Mammary epithelial cell (primary cell): ENCODE measurements at regions of chr1 and their contacts with region 1.

Region 1: GRCh38 chr1:214476958-214477870 is 74.2 kb downstream of the PTPN14 start:
- DNase-seq: peak; percentile 100
- H3K4me3 ChIP-seq: peak overlapping the region in 2 of 3 experiments; percentile 15 to 29
- H3K27ac ChIP-seq: peak overlapping the region; percentile 98
- H3K4me1 ChIP-seq: peaks cover 64% of the 10 kb centered on the region
- H3K27me3 ChIP-seq: no peaks in the 10 kb centered on the region
- CTCF ChIP-seq: no peak

Region 2: GRCh38 chr1:214404571-214405213 is 72.5 kb before region 1 on chr1:
- CTCF ChIA-PET with region 1: no interaction called
- dilution Hi-C with region 1: no loop called
- in situ Hi-C with region 1: no loop called
- intact Hi-C with region 1: loop called (anchors 5 kb)
- DNase-seq: peak; percentile 98
- H3K4me3 ChIP-seq: no peak overlapping the region
- H3K27ac ChIP-seq: peak overlapping the region; percentile 95
- H3K4me1 ChIP-seq: peaks cover 34% of the 10 kb centered on the region
- H3K27me3 ChIP-seq: no peaks in the 10 kb centered on the region
- CTCF ChIP-seq: no peak

Region 3: DNA sequence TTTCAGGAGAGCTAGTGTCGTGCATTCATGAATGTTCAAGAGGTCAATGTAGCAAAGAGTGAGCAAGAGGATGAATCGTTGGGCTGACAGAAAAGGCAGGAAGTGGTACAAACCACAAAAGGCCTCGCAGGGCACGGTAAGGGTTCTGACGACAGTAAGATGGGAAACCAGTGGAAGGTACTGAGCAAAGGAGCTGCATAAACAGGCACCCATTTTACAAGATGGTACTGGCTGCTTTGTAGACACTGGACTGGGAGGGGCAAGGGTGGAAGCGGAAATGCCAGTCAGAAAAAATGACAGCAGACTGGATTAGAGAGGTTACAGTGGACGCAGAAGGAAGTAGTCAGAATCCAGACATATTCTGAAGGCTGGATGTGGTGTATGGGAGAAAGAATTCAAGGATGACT is 49.3 kb before region 1 on chr1:
- CTCF ChIA-PET with region 1: no interaction called
- dilution Hi-C with region 1: loop called (anchors 5 kb)
- in situ Hi-C with region 1: no loop called
- intact Hi-C with region 1: loop called (anchors 1 kb)
- DNase-seq: peak; percentile 99
- H3K4me3 ChIP-seq: no peak overlapping the region
- H3K27ac ChIP-seq: peak overlapping the region; percentile 92
- H3K4me1 ChIP-seq: peaks cover 52% of the 10 kb centered on the region
- H3K27me3 ChIP-seq: no peaks in the 10 kb centered on the region
- CTCF ChIP-seq: no peak

Region 4: GRCh38 chr1:214446772-214447556 is 30.2 kb before region 1 on chr1:
- CTCF ChIA-PET with region 1: no interaction called
- dilution Hi-C with region 1: no loop called
- in situ Hi-C with region 1: no loop called
- intact Hi-C with region 1: loop called (anchors 1 kb)
- DNase-seq: peak; percentile 99
- H3K4me3 ChIP-seq: peak overlapping the region in 2 of 3 experiments; percentile 28 to 47
- H3K27ac ChIP-seq: peak overlapping the region; percentile 100
- H3K4me1 ChIP-seq: peaks cover 71% of the 10 kb centered on the region
- H3K27me3 ChIP-seq: no peaks in the 10 kb centered on the region
- CTCF ChIP-seq: no peak

Region 5: DNA sequence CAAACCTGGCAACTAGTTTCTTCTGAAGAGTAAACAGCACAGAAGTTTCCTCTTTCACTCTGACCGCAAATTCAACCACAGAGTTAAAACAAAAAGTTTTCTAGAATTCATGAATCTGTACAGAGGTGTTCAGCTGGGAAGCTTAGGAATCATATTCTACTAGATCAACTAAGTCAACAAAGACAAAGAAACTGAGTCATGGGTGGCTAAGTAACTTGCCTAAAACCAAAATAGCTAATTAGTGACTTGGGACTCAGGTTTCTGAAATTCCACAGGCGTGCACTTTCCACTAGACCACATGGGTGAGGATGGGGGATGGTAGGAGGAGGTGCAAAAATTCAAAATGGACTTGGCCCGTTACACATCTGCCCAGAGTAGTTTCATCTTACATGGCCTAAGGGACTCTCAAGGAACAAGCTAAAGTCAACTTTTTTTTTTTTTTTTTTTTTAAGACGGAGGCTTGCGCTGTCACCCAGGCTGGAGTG is 48.4 kb after region 1 on chr1:
- CTCF ChIA-PET with region 1: no interaction called
- dilution Hi-C with region 1: no loop called
- in situ Hi-C with region 1: no loop called
- intact Hi-C with region 1: loop called (anchors 2 kb)
- DNase-seq: peak; percentile 44
- H3K4me3 ChIP-seq: no peak overlapping the region
- H3K27ac ChIP-seq: no peak overlapping the region
- H3K4me1 ChIP-seq: peaks cover 26% of the 10 kb centered on the region
- H3K27me3 ChIP-seq: no peaks in the 10 kb centered on the region
- CTCF ChIP-seq: no peak

Region 6: DNA sequence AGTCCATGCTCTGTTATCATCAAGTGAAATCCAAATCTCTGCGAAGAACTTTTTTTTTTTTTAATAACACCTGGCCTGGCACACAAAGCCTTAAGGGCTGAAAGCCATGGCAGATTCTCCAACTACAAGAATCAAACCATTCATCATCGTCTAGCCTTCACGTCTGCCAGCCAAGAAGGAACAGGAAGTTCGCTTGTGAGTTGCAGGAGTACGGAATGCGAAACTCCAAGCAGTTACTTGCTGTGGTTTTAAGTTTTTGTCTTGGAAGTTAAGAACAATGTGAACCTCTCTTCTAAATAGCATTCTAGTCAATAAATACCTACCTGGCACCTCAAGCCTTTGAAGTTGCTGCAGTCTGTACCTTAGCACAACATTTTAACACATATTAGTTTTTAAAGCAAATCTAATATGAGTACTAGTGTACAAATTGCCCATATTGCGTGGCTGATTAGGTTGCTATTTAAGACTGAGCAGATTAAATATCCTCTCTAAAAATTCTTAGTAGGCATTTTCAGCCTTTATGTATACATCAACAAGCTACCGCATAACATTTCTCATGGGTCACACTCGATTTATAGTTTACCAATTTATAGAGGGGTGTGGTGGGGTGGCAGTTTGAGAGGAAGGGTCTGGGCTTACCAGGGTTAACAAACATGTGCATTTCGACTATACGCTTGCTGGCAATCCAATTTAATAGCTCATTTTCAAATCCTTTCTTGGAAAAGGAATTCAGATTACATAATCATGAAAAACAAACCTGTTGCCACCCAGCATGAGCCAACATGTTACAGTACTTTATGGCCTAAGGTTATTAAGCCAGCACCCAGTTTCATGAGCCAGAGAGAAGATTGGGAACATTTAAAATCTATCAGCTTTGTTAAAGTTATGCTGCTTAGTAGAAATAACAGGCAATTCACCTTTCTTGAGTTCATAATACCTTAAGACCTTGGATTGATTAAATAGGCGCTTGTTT is 96.5 kb after region 1 on chr1:
- CTCF ChIA-PET with region 1: interaction called, 3 read pairs
- dilution Hi-C with region 1: no loop called
- in situ Hi-C with region 1: no loop called
- intact Hi-C with region 1: loop called (anchors 1 kb)
- DNase-seq: peak; percentile 87
- H3K4me3 ChIP-seq: peak overlapping the region; percentile 9 to 25 (median 16)
- H3K27ac ChIP-seq: peak overlapping the region; percentile 99
- H3K4me1 ChIP-seq: peaks cover 68% of the 10 kb centered on the region
- H3K27me3 ChIP-seq: no peaks in the 10 kb centered on the region
- CTCF ChIP-seq: no peak

Region 7: DNA sequence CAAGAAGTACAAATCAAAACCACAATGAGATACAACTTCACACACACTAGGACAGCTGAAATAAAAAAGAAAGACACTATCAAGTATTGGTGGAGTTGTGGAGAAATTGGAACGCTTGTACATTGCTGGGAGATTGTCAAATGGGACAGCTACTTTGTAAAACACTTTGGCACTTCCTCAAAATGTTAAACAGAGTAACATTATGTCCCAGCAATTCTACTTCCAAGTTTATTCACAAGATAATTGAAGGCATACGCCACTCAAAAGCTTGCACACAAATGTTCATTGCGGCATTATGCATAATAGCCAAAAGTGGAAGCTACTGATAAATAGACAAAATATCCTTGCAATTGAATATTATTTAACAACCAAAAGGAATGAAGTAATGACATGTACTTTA is 405.4 kb after region 1 on chr1:
- CTCF ChIA-PET with region 1: no interaction called
- dilution Hi-C with region 1: no loop called
- in situ Hi-C with region 1: no loop called
- intact Hi-C with region 1: no loop called
- DNase-seq: no peak
- H3K4me3 ChIP-seq: no peak overlapping the region
- H3K27ac ChIP-seq: no peak overlapping the region
- H3K4me1 ChIP-seq: no peaks in the 10 kb centered on the region
- H3K27me3 ChIP-seq: no peaks in the 10 kb centered on the region
- CTCF ChIP-seq: no peak